T-cell (primary cell): ENCODE measurements at regions of chr14 and their contacts with region 1.

Region 1: DNA sequence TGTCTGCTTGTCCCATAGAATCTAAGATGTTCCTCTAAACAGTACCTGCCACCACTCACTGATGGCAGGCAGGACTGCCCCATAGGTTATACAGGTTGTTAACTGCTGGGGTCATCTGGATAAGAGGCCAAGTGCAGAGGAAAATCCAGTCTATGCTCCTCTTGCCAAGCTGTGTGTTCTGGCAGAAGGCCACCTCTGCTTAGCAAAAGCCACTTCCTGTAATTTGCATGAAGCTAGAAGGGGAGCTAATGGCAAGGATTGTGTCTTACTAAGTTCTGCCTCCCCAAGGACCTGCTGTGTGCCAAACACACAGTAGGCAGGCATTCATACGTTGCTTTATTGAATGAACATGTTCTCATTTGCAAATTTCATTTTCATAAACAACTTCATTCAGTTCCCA is 445.4 kb downstream of the BCL11B start:
- DNase-seq: peak in 15 of 35 experiments; percentile 1 to 32 (median 8)
- ATAC-seq: peak in 2 of 4 experiments; percentile 63 to 73
- H3K4me3 ChIP-seq: no peak overlapping the region
- H3K4me3 Mint-ChIP-seq: no peak overlapping the region
- H3K27ac ChIP-seq: no peak overlapping the region
- H3K27ac Mint-ChIP-seq: no peak overlapping the region
- H3K4me1 ChIP-seq: peaks cover 3 to 7% of the 10 kb centered on the region in 2 experiments
- H3K4me1 Mint-ChIP-seq: peaks cover 13 to 18% (median 15%) of the 10 kb centered on the region in 3 donors
- H3K27me3 ChIP-seq: no peaks in the 10 kb centered on the region
- H3K27me3 Mint-ChIP-seq: no peaks in the 10 kb centered on the region

Region 2: GRCh38 chr14:97074856-97075255 is 1751.8 kb before region 1 on chr14:
- CTCF ChIA-PET with region 1: interaction called in 1 of 2 experiments, 13 read pairs
- POLR2A ChIA-PET with region 1: no interaction called
- DNase-seq: no peak
- ATAC-seq: no peak
- H3K4me3 ChIP-seq: no peak overlapping the region
- H3K4me3 Mint-ChIP-seq: no peak overlapping the region
- H3K27ac ChIP-seq: no peak overlapping the region
- H3K27ac Mint-ChIP-seq: no peak overlapping the region
- H3K4me1 ChIP-seq: peaks cover 0 to 11% of the 10 kb centered on the region in 2 experiments
- H3K4me1 Mint-ChIP-seq: peaks cover 10 to 17% (median 12%) of the 10 kb centered on the region in 3 donors
- H3K27me3 ChIP-seq: peaks cover 0 to 9% of the 10 kb centered on the region in 2 experiments
- H3K27me3 Mint-ChIP-seq: peaks cover 4 to 13% of the 10 kb centered on the region in 2 donors

Region 3: DNA sequence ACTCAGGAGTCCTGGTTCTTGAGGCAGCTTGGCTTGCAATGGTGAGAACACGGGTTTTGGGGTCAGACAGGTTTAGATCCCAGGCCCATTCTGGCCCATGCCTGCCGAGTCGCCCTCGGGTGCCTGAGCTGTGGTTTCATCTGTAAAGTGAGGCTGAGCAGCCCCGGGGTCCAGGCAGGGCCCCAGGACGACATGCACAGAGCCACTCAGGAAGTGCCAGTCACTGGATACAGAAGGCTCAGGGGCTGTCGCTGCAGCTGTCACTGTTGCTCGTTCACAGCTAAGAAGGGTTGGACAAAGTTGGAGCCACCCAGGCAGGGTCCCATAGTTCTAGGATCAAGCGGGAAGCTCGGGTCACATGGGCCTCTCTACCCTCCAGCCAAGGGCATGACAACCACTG is 42.2 kb after region 1 on chr14:
- CTCF ChIA-PET with region 1: no interaction called
- POLR2A ChIA-PET with region 1: no interaction called
- DNase-seq: no peak
- ATAC-seq: no peak
- H3K4me3 ChIP-seq: no peak overlapping the region
- H3K4me3 Mint-ChIP-seq: no peak overlapping the region
- H3K27ac ChIP-seq: no peak overlapping the region
- H3K27ac Mint-ChIP-seq: no peak overlapping the region
- H3K4me1 ChIP-seq: no peaks in the 10 kb centered on the region
- H3K4me1 Mint-ChIP-seq: peaks cover 5 to 19% (median 5%) of the 10 kb centered on the region in 3 donors
- H3K27me3 ChIP-seq: peaks cover 0 to 4% of the 10 kb centered on the region in 2 experiments
- H3K27me3 Mint-ChIP-seq: no peaks in the 10 kb centered on the region